ENCODE measurements at regions of chr3 and their contacts with region 1.

Region 1: GRCh38 chr3:111071257-111072015 is at the start of gene NECTIN3:
- DNase-seq: peak; percentile 92
- H3K4me3 Mint-ChIP-seq: peak within 1 kb of the TSS; percentile 91
- H3K27ac Mint-ChIP-seq: peak within 1 kb of the TSS; percentile 75
- H3K4me1 Mint-ChIP-seq: peaks cover 41% of the 10 kb centered on the region
- H3K27me3 Mint-ChIP-seq: peaks cover 20% of the 10 kb centered on the region
- total RNA-seq, gene NECTIN3: 10.5 to 11.3 TPM

Region 2: GRCh38 chr3:109731620-109732473 is 1339.6 kb before region 1 on chr3:
- CTCF ChIA-PET with region 1: no interaction called
- POLR2A ChIA-PET with region 1: no interaction called
- intact Hi-C with region 1: loop called (anchors 10 kb)
- DNase-seq: peak; percentile 44
- H3K4me3 Mint-ChIP-seq: no peak overlapping the region
- H3K27ac Mint-ChIP-seq: no peak overlapping the region
- H3K4me1 Mint-ChIP-seq: peaks cover 6% of the 10 kb centered on the region
- H3K27me3 Mint-ChIP-seq: no peaks in the 10 kb centered on the region

Region 3: DNA sequence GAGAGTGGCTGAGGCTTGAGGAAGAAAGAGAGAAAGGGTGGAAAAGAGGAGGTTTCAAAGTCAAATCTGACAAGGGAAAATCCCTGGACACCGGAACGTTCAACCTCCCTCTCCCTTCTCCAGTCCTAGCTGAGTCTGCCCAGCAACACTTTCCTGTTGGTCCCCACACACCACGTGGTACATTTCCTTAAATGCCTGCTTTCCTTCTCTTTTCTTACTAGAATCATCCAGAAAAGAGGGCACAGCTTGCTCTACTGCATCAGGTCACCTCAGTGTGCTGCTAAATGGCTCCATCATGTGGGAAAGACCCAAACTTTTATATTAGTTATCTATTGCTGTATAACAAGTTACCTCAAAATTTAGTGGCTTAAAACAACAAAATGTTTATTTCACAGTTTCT is 181.3 kb after region 1 on chr3:
- CTCF ChIA-PET with region 1: no interaction called
- POLR2A ChIA-PET with region 1: no interaction called
- intact Hi-C with region 1: loop called (anchors 10 kb)
- DNase-seq: no peak
- H3K4me3 Mint-ChIP-seq: no peak overlapping the region
- H3K27ac Mint-ChIP-seq: no peak overlapping the region
- H3K4me1 Mint-ChIP-seq: no peaks in the 10 kb centered on the region
- H3K27me3 Mint-ChIP-seq: peaks cover 3% of the 10 kb centered on the region

Measured in activated CD4-positive, alpha-beta memory T cell treated with anti-CD3 and anti-CD28 coated beads for 36 hours (primary cell).